Right ventricle myocardium superior (tissue), 1 donor: ENCODE measurements at regions of chr12 and their contacts with region 1.

Region 1: GRCh38 chr12:31482816-31483215 is 108.1 kb downstream of the DENND5B start:
- DNase-seq: no peak
- ATAC-seq: no peak

Region 2: GRCh38 chr12:31406345-31406744 is 76.5 kb before region 1 on chr12:
- intact Hi-C with region 1: no loop called
- DNase-seq: no peak
- ATAC-seq: no peak

Region 3: GRCh38 chr12:31444736-31445135 is 38.1 kb before region 1 on chr12:
- intact Hi-C with region 1: loop called (anchors 5 kb)
- DNase-seq: no peak
- ATAC-seq: no peak